H1 (cell line): ENCODE measurements at regions of chr3 and their contacts with region 1.

Region 1: DNA sequence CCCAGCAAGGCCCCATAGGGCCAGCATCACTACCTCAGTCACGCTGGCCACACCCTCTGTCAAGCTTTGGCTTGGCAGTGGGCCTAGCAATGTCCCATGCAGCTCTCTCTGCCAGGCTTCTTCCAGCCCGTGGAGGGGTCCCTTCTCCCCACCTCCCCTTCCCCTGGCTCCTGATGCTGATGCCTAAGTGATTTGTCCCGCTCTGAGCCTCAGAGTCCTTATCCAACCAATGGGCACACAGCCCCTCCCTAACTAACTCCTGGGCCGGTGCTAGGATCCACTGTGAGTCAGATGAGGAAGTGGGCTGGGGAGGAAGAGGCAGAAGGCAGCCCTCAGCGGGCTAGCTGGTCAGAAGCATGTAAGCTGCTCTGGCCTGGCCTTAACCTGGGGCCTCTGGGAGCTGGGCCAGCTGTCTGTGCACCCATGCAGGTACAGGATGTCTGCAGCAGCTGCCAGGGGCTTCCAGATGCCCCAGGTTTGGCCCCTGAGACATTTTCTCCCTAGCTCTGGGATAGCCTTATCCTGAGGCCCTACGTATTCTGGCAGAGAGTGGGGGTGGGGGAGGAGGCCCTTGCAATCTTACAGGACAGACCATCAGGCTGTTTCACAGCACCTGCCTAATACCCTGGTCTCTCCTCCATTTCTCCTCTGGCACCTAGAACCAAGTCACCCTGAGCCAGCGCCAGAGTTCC is 740 bp upstream of the ZBTB47 start:
- DNase-seq: peak in 1 of 2 experiments; percentile 58
- H3K4me3 ChIP-seq: peak overlapping the region in 1 of 4 experiments; percentile 74; a peak in 1 of 8 replicates
- H3K27ac ChIP-seq: no peak overlapping the region
- H3K4me1 ChIP-seq: peaks cover 6 to 39% (median 30%) of the 10 kb centered on the region in 4 experiments
- H3K27me3 ChIP-seq: no peaks in the 10 kb centered on the region
- CTCF ChIP-seq: no peak
- EP300 ChIP-seq: no peak
- POLR2A ChIP-seq: no peak
- RAD21 ChIP-seq: no peak

Region 2: GRCh38 chr3:42497009-42497731 is 155.6 kb before region 1 on chr3:
- CTCF ChIA-PET with region 1: no interaction called
- POLR2A ChIA-PET with region 1: no interaction called
- DNase-seq: peak; percentile 61 to 78
- H3K4me3 ChIP-seq: peak overlapping the region in 1 of 4 experiments; percentile 23; a peak in 1 of 8 replicates
- H3K27ac ChIP-seq: no peak overlapping the region
- H3K4me1 ChIP-seq: peaks cover 0 to 4% (median 3%) of the 10 kb centered on the region in 4 experiments; a peak in 6 of 7 replicates
- H3K27me3 ChIP-seq: peaks cover 0 to 41% (median 27%) of the 10 kb centered on the region in 4 experiments; a peak in 6 of 7 replicates
- CTCF ChIP-seq: no peak
- EP300 ChIP-seq: no peak
- POLR2A ChIP-seq: no peak
- RAD21 ChIP-seq: peak in 1 of 2 experiments; percentile 3; a peak in 1 of 4 replicates

Region 3: DNA sequence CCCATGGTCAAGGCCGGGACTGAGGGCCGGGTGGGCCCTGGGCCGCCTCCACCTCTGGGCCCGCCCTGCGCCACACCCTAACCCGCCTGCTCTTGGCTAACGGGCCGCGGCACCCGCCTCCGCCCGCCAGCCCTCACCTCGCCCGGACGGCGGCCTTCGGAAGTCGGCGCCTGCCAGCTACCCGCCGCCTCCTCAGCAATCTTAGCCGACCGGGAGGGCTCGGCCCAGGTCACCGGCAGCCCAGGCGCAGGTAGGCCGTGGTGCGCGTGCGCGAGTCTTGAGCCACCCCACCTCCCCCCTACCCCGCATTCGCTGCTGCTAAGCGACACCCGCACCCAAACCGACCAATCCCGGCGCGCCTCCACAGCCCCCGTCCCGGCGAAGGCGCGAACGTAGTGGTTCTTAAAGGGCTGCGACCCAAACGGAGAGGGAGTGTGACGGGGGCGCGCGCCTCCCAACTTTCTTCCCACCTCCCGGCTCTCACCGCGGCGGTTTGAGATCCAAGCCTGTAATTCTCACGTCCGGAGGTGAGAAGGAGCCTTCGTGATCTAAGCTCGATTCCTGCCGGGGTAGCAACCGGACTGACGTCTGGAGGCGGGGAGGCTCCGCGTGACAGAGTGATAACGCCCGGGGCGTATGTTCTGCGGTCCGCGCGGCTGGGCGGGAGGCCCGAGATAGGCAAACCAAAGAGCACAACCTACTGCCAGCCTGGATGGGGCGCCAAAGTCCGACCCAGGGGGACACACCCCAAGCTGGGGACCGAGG is 70.9 kb before region 1 on chr3 and contains the start of gene SEC22C:
- CTCF ChIA-PET with region 1: no interaction called
- POLR2A ChIA-PET with region 1: interaction called, 12 read pairs
- DNase-seq: peak; percentile 88 to 96
- H3K4me3 ChIP-seq: peak within 1 kb of the TSS; percentile 70 to 94 (median 86)
- H3K27ac ChIP-seq: peak within 1 kb of the TSS; percentile 77
- H3K4me1 ChIP-seq: peaks cover 2 to 14% (median 5%) of the 10 kb centered on the region in 4 experiments; a peak in 6 of 7 replicates
- H3K27me3 ChIP-seq: no peaks in the 10 kb centered on the region
- CTCF ChIP-seq: peak; percentile 28 to 47 (median 40); a peak in 3 of 4 replicates
- EP300 ChIP-seq: 0 out of 3 replicates have a peak, but pooled peaks of 1 of the 2 experiments have one; percentile 1
- POLR2A ChIP-seq: peak; percentile 81 to 85
- RAD21 ChIP-seq: peak; percentile 60; a peak in 3 of 4 replicates
- total RNA-seq, gene SEC22C: 38.3 and 38.5 TPM in 2 replicates

Region 4: DNA sequence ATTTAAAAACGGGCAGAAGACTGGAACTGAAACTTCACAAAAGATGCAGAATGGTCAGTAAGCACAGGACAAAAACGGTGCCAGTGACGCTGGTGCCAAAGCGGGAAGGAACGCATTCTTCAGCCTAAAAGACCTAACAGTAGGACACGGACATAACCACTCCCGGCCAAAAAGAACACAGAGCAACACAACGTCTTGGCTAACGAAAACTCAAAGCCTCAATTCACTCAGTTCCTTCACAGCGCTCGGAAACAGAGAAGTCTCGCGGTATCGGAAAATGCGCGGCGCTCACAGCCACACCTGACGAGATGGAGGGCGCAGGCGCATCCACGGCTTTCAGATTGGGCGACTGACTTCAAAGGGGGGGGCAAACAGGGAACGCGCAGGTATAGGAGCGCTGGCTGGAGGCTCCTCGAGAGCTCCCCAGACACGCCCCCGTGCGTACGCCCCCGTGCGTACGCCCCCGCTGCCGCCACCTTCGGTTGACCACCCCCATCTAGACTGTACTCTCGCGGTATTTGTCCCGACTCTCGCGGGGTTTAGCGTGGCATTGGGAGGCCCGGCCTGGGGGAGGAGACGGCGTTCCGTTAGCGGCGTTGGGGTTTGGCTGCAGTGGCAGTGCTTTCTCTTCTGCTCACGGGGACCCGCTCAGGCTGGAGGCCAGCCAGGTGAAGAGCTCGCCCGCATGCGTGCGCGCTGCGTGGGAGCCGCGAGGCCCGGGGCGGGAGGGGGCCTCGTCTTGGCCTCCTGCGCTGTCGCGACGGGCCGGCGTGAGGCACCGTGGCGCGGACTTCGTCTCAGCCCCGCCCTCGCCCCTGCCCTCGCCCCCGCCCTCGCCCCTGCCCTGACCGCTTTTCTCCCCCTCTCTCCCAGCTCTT is 52.4 kb before region 1 on chr3 and contains the start of gene NKTR:
- CTCF ChIA-PET with region 1: interaction called, 3 read pairs
- POLR2A ChIA-PET with region 1: interaction called, 13 read pairs
- DNase-seq: peak; percentile 98 to 100
- H3K4me3 ChIP-seq: peak within 1 kb of the TSS; percentile 77 to 91 (median 88)
- H3K27ac ChIP-seq: peak within 1 kb of the TSS; percentile 91
- H3K4me1 ChIP-seq: peaks cover 0 to 6% (median 3%) of the 10 kb centered on the region in 4 experiments; a peak in 5 of 7 replicates
- H3K27me3 ChIP-seq: no peaks in the 10 kb centered on the region
- CTCF ChIP-seq: 0 out of 4 replicates have a peak, but pooled peaks of 1 of the 3 experiments have one; percentile 19
- EP300 ChIP-seq: no peak
- POLR2A ChIP-seq: peak; percentile 92 to 96
- RAD21 ChIP-seq: no peak
- total RNA-seq, gene NKTR: 56.6 and 62.2 TPM in 2 replicates

Region 5: GRCh38 chr3:42635111-42635510 is 17.6 kb before region 1 on chr3:
- CTCF ChIA-PET with region 1: interaction called, 9 read pairs
- POLR2A ChIA-PET with region 1: interaction called, 14 read pairs
- DNase-seq: no peak
- H3K4me3 ChIP-seq: no peak overlapping the region
- H3K27ac ChIP-seq: no peak overlapping the region
- H3K4me1 ChIP-seq: peaks cover 0 to 12% (median 9%) of the 10 kb centered on the region in 4 experiments; a peak in 5 of 7 replicates
- H3K27me3 ChIP-seq: no peaks in the 10 kb centered on the region
- CTCF ChIP-seq: peak in 1 of 3 experiments; percentile 21; a peak in 1 of 4 replicates
- EP300 ChIP-seq: no peak
- POLR2A ChIP-seq: no peak
- RAD21 ChIP-seq: peak in 1 of 2 experiments; percentile 3; a peak in 1 of 4 replicates

Region 6: DNA sequence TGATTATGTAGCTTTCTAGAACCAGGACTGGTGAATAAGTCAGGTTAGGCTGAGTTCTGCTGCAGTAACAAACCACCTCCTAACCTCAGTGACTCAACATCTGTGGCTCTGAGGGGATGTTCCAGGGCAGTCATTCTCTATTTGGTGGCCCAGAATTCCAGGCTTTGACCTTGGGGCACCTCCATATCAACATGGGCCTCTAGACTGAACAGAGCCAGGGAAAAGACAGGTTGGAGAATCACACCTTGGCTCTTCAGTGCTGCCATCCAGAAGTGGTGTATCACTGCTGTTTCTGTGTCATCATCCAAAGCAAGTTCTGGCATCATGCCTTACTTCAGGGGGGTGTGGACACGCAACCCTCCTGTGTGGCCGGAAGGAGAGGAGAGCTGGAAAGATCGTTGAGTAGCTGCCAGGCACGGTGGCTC is 16.0 kb after region 1 on chr3:
- CTCF ChIA-PET with region 1: interaction called, 6 read pairs
- POLR2A ChIA-PET with region 1: interaction called, 10 read pairs
- DNase-seq: no peak
- H3K4me3 ChIP-seq: no peak overlapping the region
- H3K27ac ChIP-seq: no peak overlapping the region
- H3K4me1 ChIP-seq: peaks cover 0 to 7% (median 0%) of the 10 kb centered on the region in 4 experiments; a peak in 2 of 7 replicates
- H3K27me3 ChIP-seq: peaks cover 0 to 2% (median 0%) of the 10 kb centered on the region in 4 experiments; a peak in 2 of 7 replicates
- CTCF ChIP-seq: no peak
- EP300 ChIP-seq: no peak
- POLR2A ChIP-seq: no peak
- RAD21 ChIP-seq: no peak

Region 7: DNA sequence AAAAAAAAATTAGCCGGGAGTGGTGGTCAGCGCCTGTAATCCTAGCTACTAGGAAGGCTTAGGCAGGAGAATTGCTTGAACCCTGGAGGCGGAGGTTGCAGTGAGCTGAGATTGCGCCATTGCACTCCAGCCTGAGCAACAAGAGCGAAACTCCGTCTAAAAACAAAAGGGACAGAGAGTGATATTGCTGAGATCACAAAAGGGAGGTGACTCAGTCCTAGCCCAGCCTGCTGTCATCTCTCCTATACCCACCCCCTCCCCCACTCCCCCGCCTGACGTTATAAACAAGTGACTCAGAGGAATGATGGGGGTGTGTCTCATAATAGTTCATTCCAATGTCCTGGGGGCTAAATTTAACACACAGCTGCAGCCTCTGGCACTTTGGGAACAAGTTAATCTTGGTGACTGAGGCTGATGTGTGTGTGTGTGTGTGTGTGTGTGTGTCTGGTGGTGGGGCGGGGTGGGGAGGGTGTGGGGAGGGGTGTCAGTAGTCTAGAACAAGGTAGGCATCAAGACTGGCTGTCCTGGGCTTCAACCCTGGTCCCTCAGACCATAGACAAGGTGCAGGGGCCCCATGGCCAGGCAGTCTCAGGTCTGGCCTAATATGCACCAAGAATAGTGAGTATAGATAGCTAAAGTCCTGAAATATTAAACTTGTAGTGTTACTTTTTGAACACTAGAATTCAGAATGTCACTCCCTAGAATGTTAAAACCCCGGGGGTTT is 31.3 kb after region 1 on chr3:
- CTCF ChIA-PET with region 1: no interaction called
- POLR2A ChIA-PET with region 1: no interaction called
- DNase-seq: peak in 1 of 2 experiments; percentile 15
- H3K4me3 ChIP-seq: no peak overlapping the region
- H3K27ac ChIP-seq: no peak overlapping the region
- H3K4me1 ChIP-seq: peaks cover 0 to 6% (median under 1%) of the 10 kb centered on the region in 4 experiments; a peak in 2 of 7 replicates
- H3K27me3 ChIP-seq: no peaks in the 10 kb centered on the region; a peak in 1 of 7 replicates
- CTCF ChIP-seq: no peak
- EP300 ChIP-seq: no peak
- POLR2A ChIP-seq: no peak
- RAD21 ChIP-seq: no peak

Region 8: DNA sequence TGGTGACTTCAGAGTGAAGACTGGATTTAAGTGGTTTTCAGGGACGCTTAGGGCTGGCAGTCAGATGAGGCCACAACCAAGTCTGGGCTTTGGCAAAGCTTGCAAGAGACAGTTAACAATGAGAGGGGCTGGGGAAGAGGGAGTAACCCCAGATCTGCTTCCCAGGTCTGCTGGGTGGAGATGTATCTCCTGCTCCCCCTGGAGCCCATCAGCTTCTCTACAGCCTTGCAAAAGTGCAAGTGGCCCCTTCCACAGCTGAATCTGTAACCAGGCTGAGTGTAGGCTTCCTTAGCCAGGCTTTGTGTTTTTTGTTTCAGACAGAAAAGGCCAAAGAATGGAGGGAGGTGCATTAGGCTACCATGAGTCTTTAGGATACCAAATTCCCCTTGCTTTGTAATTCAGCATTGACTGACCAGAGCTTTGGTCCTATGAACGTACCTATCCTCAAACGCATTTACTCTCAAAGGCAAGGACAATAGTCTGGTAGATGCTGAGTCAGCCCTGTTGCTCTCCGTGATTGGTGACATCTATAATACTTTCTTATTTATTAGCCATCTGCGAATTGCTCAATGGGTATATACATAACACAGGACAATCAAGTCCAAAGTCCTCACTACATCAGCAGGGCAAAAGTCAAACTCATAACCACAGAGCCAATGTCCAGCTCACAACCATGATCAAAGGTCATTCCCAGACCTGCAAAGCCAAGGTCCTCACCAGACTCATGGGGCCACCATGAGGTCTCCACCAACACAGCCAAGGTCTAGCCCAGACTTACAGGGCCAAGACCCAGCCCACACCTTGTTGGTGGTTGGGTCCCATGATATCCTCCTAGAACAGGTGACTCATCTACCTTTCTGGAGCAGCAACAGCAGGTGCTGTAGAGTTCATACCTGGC is 103.2 kb after region 1 on chr3:
- CTCF ChIA-PET with region 1: interaction called, 32 read pairs
- POLR2A ChIA-PET with region 1: interaction called, 5 read pairs
- DNase-seq: peak in 1 of 2 experiments; percentile 52
- H3K4me3 ChIP-seq: no peak overlapping the region
- H3K27ac ChIP-seq: no peak overlapping the region
- H3K4me1 ChIP-seq: no peaks in the 10 kb centered on the region
- H3K27me3 ChIP-seq: no peaks in the 10 kb centered on the region
- CTCF ChIP-seq: peak; percentile 63 to 89 (median 73)
- EP300 ChIP-seq: no peak
- POLR2A ChIP-seq: no peak
- RAD21 ChIP-seq: peak; percentile 75 to 83

Region 9: DNA sequence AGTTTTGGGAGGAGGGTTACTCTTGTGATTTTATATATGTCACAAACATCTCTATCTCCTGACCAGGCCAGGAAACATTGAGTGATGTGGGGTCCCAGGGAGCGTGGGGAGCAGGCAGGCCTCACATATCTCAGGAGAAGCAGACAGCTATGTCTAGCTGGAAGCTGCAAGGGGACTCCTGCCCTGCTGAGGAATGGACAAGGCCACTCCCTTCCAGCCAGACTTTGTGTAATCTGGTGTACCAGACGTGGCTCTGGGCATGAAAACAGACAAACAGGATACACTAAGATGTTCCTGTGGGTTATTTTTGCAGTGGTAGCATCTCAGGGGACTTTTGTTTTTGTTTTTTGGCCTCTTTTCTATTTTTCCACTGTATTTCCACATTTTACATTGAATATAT is 199.7 kb after region 1 on chr3:
- CTCF ChIA-PET with region 1: no interaction called
- POLR2A ChIA-PET with region 1: no interaction called
- DNase-seq: no peak
- H3K4me3 ChIP-seq: no peak overlapping the region
- H3K27ac ChIP-seq: no peak overlapping the region
- H3K4me1 ChIP-seq: peaks cover 0 to 5% (median 0%) of the 10 kb centered on the region in 4 experiments; a peak in 2 of 7 replicates
- H3K27me3 ChIP-seq: no peaks in the 10 kb centered on the region
- CTCF ChIP-seq: no peak
- EP300 ChIP-seq: no peak
- POLR2A ChIP-seq: no peak
- RAD21 ChIP-seq: no peak